Sciatic nerve (tissue), 2 donors: ENCODE measurements at regions of chr19 and their contacts with region 1.

Region 1: GRCh38 chr19:1935484-1936208 is 5.3 kb upstream of the CSNK1G2 start:
- DNase-seq: no peak
- ATAC-seq: no peak

Region 2: DNA sequence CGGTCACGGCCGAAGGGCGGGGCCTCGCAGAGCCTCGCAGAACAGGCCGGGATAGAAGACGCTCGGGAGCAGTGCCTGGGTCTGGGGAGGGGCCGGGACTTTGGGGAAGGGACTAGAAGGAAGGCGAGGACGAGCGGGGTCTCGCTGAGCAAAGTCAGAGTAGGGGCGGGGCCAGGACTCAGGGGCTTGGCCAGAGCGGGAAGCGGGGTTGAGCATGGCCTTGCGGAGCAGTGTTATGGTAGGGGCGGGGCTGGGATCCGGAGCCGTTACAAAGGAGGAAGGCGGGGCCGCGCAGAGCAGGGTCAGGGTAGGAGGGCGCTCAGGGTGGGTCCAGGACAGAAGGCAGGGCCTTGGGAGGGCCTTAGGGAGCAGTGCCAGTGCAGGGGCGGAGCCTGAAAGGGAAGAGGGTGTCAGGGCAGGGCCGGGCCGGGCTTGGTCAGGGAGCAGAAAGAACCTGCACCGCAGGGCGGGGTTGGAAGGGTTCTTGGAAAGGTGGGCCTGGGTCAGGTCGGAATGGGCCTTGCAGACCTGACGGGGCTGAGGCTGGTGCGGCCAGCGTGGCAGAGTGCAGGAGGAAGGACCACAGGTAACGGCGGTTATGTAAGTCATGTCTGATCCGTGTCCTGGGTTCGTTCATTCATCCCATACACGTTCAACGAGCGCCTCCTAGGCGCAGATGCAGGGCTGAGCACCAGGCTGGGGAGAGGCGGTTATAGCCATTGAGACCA is 123.0 kb before region 1 on chr19:
- intact Hi-C with region 1: no loop called
- DNase-seq: peak; percentile 94
- ATAC-seq: peak; percentile 91

Region 3: DNA sequence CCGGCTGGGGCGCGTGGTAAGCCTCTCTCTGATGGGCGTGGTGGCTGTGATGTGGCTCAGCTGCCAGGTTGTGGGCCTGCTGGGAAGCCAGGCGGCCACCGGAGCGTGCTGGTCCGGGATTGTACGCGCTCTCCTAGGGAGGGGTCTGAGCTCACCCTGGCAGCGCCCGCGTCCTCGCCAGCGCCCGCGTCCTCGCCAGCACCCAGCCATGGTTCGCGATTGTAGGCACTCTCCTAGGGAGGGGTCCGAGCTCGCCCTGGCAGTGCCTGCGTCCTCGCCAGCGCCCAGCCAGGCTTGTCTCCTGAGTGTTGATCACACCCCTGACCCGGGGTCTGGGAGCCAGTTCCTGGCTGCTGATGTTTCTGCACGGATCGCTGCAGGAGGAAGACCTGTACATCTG is 16.7 kb before region 1 on chr19:
- intact Hi-C with region 1: loop called (anchors 2 kb)
- DNase-seq: no peak
- ATAC-seq: no peak